Calu3 (cell line): ENCODE measurements at regions of chr19 and their contacts with region 1.

Region 1: GRCh38 chr19:14328406-14328805 is 52.8 kb upstream of the ADGRE5 start:
- DNase-seq: no peak
- H3K4me3 Mint-ChIP-seq: no peak overlapping the region
- H3K27ac Mint-ChIP-seq: no peak overlapping the region
- H3K4me1 Mint-ChIP-seq: no peaks in the 10 kb centered on the region
- H3K27me3 Mint-ChIP-seq: no peaks in the 10 kb centered on the region
- CTCF ChIP-seq: no peak

Region 2: DNA sequence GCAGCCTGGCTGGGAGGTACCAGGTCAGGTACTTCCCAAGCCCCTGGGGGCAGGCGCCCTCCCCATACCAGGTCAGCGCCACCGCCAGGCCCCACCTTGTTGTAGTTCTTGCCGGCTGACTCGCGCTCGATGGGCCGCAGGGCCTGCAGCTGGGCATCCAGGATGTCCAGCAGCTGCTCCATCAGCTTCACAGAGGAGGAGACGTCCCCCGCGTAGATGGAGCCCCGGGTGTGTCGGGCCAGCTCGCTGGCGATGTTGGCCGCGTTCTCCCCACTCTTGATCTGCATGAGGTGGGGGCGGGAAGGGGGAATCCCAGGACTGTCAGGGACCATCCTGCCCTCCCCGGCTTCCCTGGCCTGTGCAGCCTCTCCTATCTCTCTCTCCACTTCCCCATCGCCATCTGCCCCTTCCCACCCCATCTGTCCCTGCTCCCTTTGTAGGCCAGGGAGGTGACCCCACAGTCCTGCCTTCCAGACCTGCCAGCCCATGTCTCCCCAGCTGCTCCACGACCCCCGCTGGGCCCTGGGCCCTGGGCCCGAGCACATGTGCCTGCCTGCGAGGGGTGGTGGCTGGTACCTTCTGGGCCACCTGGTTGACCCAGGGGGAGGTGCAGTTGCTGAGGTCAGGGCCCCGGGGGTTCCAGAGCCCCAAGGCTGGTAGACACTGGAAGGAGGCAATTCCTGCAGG is 168.2 kb before region 1 on chr19:
- CTCF ChIA-PET with region 1: no interaction called
- intact Hi-C with region 1: no loop called
- DNase-seq: no peak
- H3K4me3 Mint-ChIP-seq: no peak overlapping the region
- H3K27ac Mint-ChIP-seq: no peak overlapping the region
- H3K4me1 Mint-ChIP-seq: no peaks in the 10 kb centered on the region
- H3K27me3 Mint-ChIP-seq: no peaks in the 10 kb centered on the region
- CTCF ChIP-seq: no peak

Region 3: DNA sequence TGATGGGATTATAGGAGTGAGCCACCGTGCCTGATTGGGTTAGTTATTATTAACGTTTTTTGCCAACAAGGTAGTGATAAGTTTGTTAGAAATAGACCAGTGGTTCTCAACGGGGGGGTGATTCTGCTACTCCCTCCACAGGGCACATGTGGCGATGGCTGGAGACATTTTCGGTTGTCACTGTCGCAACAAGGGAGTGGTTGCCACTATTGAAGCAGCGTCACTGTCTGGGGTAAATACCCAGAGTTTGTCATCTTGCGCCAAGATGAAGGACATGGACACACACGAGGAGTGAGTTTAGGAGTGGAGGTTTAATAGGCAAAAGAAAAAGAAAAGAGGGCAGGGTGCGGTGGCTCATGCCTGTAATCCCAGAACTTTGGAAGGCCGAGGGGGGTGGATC is 327.3 kb after region 1 on chr19:
- CTCF ChIA-PET with region 1: interaction called, 16 read pairs
- intact Hi-C with region 1: no loop called
- DNase-seq: no peak
- H3K4me3 Mint-ChIP-seq: no peak overlapping the region
- H3K27ac Mint-ChIP-seq: no peak overlapping the region
- H3K4me1 Mint-ChIP-seq: no peaks in the 10 kb centered on the region
- H3K27me3 Mint-ChIP-seq: peaks cover 18% of the 10 kb centered on the region
- CTCF ChIP-seq: no peak